K562 (cell line): ENCODE measurements at regions of chr13 and their contacts with region 1.

Region 1: DNA sequence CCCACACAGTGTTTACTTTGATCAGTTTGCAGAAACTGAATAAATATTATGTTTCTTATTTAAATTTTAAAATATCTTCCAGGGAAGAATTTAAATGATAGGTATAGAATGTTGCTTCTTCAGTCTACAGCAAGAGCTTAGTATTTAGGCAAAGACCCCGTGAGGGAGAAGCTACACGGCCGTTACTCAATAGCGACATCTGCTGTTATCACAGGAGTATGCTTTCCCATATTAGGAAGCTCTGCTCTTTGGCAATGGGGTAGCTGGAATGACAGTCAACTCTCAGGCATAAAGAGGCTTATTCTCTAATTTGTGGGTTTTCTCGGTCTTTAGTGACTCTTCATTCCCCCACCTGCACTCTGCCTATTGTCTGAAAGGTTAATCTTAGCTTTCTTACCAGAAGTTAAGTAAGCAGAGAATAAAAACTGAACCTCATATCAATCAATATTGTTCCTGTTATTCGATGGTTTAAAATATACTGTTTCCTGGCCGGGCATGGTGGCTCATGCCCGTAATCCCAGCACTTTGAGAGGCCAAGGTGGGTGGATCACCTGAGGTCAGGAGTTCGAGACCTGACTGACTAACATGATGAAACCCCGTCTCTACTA is 13.2 kb upstream of the LHFPL6 start:
- DNase-seq: peak; percentile 44 to 55 (median 53)
- ATAC-seq: peak; percentile 88
- H3K4me3 ChIP-seq: no peak overlapping the region
- H3K27ac ChIP-seq: no peak overlapping the region
- H3K4me1 ChIP-seq: no peaks in the 10 kb centered on the region
- H3K27me3 ChIP-seq: no peaks in the 10 kb centered on the region; a peak in 2 of 5 replicates
- CTCF ChIP-seq: peak; percentile 57 to 62 (median 62)
- EP300 ChIP-seq: no peak
- POLR2A ChIP-seq: no peak
- RAD21 ChIP-seq: peak; percentile 34 to 61

Region 2: DNA sequence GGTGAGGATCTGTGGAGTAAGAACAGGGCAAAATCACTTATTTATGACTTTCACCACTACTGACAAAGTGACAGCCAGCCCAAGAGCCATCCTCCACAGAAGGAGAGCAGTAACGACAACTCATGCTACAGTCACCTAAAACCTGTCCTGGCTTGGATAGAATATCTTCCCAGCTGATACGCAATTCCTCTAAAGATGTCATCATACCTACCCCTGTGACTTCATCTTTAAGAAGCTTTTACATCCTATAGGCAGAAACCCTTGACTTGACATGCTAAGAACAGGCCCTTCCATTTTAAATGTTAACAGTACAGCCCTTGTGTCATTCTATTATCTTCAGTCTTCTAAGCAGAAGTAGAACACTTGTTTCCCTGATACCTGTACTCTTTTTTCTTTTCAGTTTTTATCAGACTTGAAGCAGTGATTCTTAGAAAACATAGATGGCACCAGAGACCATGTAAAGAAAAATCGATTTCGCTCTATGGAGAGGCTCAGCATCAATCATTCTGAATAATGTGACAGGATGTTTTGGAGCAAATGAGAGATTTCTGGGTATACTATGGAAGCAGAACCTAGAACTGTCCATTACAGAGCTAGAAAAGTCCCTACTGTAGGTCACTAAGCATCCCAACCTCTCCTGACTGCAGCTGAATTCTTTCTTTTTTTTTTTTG is 645.7 kb before region 1 on chr13:
- CTCF ChIA-PET with region 1: no interaction called
- POLR2A ChIA-PET with region 1: no interaction called
- in situ Hi-C with region 1: loop called (anchors 25 kb)
- intact Hi-C with region 1: loop called (anchors 5 kb)
- DNase-seq: no peak
- ATAC-seq: peak; percentile 29; the same call in 1 of the 3 replicates
- H3K4me3 ChIP-seq: no peak overlapping the region
- H3K27ac ChIP-seq: no peak overlapping the region
- H3K4me1 ChIP-seq: no peaks in the 10 kb centered on the region; a peak in 1 of 5 replicates
- H3K27me3 ChIP-seq: no peaks in the 10 kb centered on the region; a peak in 1 of 5 replicates
- CTCF ChIP-seq: peak in 2 of 3 experiments; percentile 25 to 50; a peak in 2 of 6 replicates
- EP300 ChIP-seq: no peak
- POLR2A ChIP-seq: no peak
- RAD21 ChIP-seq: peak; percentile 40 to 68

Region 3: GRCh38 chr13:39051157-39051556 is 565.0 kb before region 1 on chr13:
- CTCF ChIA-PET with region 1: no interaction called
- POLR2A ChIA-PET with region 1: no interaction called
- in situ Hi-C with region 1: no loop called
- intact Hi-C with region 1: loop called (anchors 10 kb)
- DNase-seq: peak in 1 of 4 experiments; percentile 15
- ATAC-seq: 0 out of 3 replicates have a peak, but pooled peaks have one; percentile 37
- H3K4me3 ChIP-seq: no peak overlapping the region
- H3K27ac ChIP-seq: no peak overlapping the region
- H3K4me1 ChIP-seq: no peaks in the 10 kb centered on the region
- H3K27me3 ChIP-seq: no peaks in the 10 kb centered on the region
- CTCF ChIP-seq: peak; percentile 8 to 38 (median 19); a peak in 2 of 6 replicates
- EP300 ChIP-seq: no peak
- POLR2A ChIP-seq: no peak
- RAD21 ChIP-seq: peak in 1 of 2 experiments; percentile 4; a peak in 1 of 4 replicates

Region 4: DNA sequence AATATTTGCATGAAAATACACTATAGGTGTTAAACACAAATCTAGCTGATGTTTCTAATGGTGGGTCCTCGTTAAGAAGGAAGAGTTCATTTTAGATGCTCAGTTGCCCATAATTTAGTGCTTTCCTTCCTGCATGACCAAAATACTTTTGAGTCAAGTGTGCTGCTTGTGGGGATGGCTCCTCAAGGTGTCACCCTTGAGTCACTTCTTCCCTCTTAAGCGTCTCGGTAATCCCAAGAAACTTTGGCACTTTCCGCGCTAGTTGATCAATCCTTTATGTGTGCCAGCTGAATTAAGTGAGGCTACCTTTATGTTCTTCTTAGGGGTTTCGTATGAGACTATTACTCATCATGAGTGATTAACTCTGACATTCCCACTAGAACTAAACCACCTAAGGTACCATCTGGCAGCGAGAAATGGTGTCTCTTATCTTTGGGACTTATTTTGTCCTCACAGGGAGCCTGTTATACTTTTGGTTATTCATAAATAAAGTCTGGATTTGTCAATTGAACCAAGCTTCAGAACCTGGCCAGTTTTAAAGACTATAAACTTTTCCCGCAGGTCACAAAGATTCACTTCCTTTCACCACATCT is 471.2 kb before region 1 on chr13:
- CTCF ChIA-PET with region 1: no interaction called
- POLR2A ChIA-PET with region 1: no interaction called
- in situ Hi-C with region 1: no loop called
- intact Hi-C with region 1: loop called (anchors 10 kb)
- DNase-seq: peak; percentile 13 to 41 (median 28)
- ATAC-seq: peak; percentile 69
- H3K4me3 ChIP-seq: no peak overlapping the region
- H3K27ac ChIP-seq: no peak overlapping the region
- H3K4me1 ChIP-seq: no peaks in the 10 kb centered on the region
- H3K27me3 ChIP-seq: no peaks in the 10 kb centered on the region
- CTCF ChIP-seq: peak; percentile 50 to 58 (median 56); a peak in 5 of 6 replicates
- EP300 ChIP-seq: no peak
- POLR2A ChIP-seq: no peak
- RAD21 ChIP-seq: peak in 1 of 2 experiments; percentile 55; a peak in 3 of 4 replicates

Region 5: GRCh38 chr13:39159846-39160370 is 456.3 kb before region 1 on chr13:
- CTCF ChIA-PET with region 1: no interaction called
- POLR2A ChIA-PET with region 1: no interaction called
- in situ Hi-C with region 1: loop called (anchors 10 kb)
- intact Hi-C with region 1: no loop called
- DNase-seq: no peak
- ATAC-seq: no peak
- H3K4me3 ChIP-seq: no peak overlapping the region
- H3K27ac ChIP-seq: no peak overlapping the region
- H3K4me1 ChIP-seq: no peaks in the 10 kb centered on the region
- H3K27me3 ChIP-seq: no peaks in the 10 kb centered on the region
- CTCF ChIP-seq: no peak
- EP300 ChIP-seq: no peak
- POLR2A ChIP-seq: no peak
- RAD21 ChIP-seq: no peak

Region 6: DNA sequence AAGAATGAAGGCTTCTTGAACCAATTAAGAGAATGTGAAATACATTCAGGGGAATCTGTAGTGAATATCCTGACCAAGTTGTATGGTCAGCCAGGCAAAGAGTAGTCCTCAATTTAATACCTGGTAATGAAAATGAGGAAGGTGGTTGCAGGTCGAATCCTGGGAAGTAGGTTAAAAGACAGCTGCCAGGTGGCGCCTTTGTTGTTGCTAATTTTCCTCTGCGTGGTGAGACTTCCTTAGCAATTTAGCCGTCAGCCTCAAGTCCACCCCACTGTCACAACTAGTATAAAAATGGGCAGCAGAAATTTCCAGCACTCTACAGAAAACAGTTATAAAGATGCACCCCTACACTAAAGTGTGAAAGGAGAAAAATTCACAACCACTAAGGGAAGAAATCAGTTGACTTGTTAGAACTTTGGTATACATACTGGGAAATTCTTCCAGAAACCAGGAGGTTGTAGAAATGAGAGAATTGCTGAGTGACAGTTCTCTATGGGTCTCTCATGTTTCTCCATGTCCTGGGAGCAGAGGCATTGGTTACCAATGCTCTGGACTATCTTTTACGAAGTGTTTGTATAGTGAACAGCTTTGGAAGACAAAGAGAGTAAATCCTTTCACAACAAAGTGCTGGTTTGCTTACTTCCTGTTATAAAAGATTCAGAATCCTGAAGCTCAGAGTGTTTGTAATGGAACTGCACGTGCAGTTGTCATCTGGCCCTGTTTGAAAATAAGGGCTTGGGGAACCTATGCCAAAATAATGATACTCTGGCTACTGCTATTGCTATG is 342.0 kb before region 1 on chr13:
- CTCF ChIA-PET with region 1: no interaction called
- POLR2A ChIA-PET with region 1: no interaction called
- in situ Hi-C with region 1: no loop called
- intact Hi-C with region 1: loop called (anchors 10 kb)
- DNase-seq: peak in 1 of 4 experiments; percentile 6
- ATAC-seq: no peak
- H3K4me3 ChIP-seq: no peak overlapping the region
- H3K27ac ChIP-seq: no peak overlapping the region
- H3K4me1 ChIP-seq: no peaks in the 10 kb centered on the region
- H3K27me3 ChIP-seq: no peaks in the 10 kb centered on the region
- CTCF ChIP-seq: peak in 1 of 3 experiments; percentile 26; a peak in 1 of 6 replicates
- EP300 ChIP-seq: no peak
- POLR2A ChIP-seq: no peak
- RAD21 ChIP-seq: no peak

Region 7: DNA sequence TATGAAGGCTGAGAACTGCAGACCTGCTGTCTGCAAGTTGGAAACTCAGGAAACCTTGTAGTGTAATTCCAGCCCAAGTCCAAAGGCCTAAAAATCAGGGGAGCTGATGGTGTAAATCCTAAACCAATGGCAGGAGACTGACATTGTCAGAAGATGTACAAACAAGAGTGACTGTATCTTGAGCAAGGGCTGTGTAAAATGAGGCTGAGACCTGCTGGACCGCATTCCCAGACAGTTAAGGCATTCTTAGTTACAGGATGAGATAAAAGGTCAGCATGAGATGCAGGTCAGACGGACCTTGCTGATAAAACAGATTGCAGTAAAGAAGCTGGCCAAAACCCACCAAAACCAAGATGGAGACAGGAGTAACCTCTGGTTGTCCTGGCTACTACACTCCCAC is 187.0 kb after region 1 on chr13:
- CTCF ChIA-PET with region 1: no interaction called
- POLR2A ChIA-PET with region 1: no interaction called
- in situ Hi-C with region 1: no loop called
- intact Hi-C with region 1: no loop called
- DNase-seq: no peak
- ATAC-seq: no peak
- H3K4me3 ChIP-seq: no peak overlapping the region
- H3K27ac ChIP-seq: no peak overlapping the region
- H3K4me1 ChIP-seq: no peaks in the 10 kb centered on the region
- H3K27me3 ChIP-seq: no peaks in the 10 kb centered on the region
- CTCF ChIP-seq: no peak
- EP300 ChIP-seq: no peak
- POLR2A ChIP-seq: no peak
- RAD21 ChIP-seq: no peak